Thyroid gland (tissue), 4 donors: ENCODE measurements at regions of chr16 and their contacts with region 1.

Region 1: GRCh38 chr16:8885674-8886592 is 3.8 kb downstream of the LITAFD start:
- DNase-seq: peak in 1 of 2 donors; percentile 31
- H3K4me3 ChIP-seq: no peak overlapping the region
- H3K27ac ChIP-seq: no peak overlapping the region
- H3K4me1 ChIP-seq: peaks cover 0 to 17% of the 10 kb centered on the region in 2 donors
- H3K27me3 ChIP-seq: no peaks in the 10 kb centered on the region
- CTCF ChIP-seq: no peak
- POLR2A ChIP-seq: no peak

Region 2: GRCh38 chr16:8928467-8928957 is 42.6 kb after region 1 on chr16:
- intact Hi-C with region 1: loop called (anchors 5 kb)
- DNase-seq: no peak
- H3K4me3 ChIP-seq: no peak overlapping the region
- H3K27ac ChIP-seq: no peak overlapping the region
- H3K4me1 ChIP-seq: peaks cover 6 to 10% of the 10 kb centered on the region in 2 donors
- H3K27me3 ChIP-seq: no peaks in the 10 kb centered on the region
- CTCF ChIP-seq: no peak
- POLR2A ChIP-seq: no peak

Region 3: GRCh38 chr16:8963825-8964441 is 78.0 kb after region 1 on chr16 and contains the start of gene USP7:
- intact Hi-C with region 1: loop called (anchors 10 kb)
- DNase-seq: peak; percentile 88 to 93
- H3K4me3 ChIP-seq: peak within 1 kb of the TSS; percentile 17 to 77 (median 57)
- H3K27ac ChIP-seq: peak within 1 kb of the TSS in 2 of 3 donors; percentile 21 to 79
- H3K4me1 ChIP-seq: peaks cover 35 to 36% of the 10 kb centered on the region in 2 donors
- H3K27me3 ChIP-seq: no peaks in the 10 kb centered on the region
- CTCF ChIP-seq: no peak
- POLR2A ChIP-seq: peak in 1 of 2 donors; percentile 82
- total RNA-seq, gene USP7: 57.9 to 93.6 (median 85.5) TPM

Region 4: DNA sequence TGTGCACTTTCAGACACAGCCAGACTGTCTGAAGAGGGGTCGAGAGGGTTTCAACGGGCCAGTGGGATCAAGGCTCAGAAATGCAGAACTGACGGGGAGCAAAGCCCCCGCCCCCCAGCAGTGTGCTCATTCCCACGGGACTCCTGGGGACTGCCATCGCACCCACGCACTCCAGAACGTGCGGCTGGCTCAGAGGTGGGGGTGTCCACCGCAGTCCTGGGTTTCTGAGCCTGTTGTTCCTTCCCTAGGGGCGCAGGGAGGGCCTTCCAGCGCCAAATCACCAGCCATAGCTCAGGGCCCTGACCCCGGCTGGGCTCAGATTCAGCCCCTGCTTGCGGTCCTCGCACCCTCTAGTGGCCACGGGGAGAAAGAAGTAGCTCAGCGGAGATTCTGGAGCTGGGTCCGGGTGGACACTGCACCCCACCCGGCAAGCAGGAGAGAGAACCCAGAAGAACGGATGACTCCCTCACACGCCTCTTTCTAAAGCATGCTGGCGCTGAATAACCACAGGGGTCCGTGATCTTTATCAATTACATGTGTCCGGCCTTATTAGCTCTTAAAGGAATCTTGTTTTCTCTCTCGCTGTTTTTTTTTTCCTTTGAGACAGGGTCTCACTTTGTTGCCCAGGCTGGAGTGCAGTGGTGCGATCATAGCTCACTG is 122.8 kb after region 1 on chr16:
- intact Hi-C with region 1: no loop called
- DNase-seq: peak; percentile 69 to 77
- H3K4me3 ChIP-seq: no peak overlapping the region
- H3K27ac ChIP-seq: no peak overlapping the region
- H3K4me1 ChIP-seq: peaks cover 4 to 9% of the 10 kb centered on the region in 2 donors
- H3K27me3 ChIP-seq: no peaks in the 10 kb centered on the region
- CTCF ChIP-seq: peak; percentile 34 to 83 (median 70)
- POLR2A ChIP-seq: no peak

Region 5: DNA sequence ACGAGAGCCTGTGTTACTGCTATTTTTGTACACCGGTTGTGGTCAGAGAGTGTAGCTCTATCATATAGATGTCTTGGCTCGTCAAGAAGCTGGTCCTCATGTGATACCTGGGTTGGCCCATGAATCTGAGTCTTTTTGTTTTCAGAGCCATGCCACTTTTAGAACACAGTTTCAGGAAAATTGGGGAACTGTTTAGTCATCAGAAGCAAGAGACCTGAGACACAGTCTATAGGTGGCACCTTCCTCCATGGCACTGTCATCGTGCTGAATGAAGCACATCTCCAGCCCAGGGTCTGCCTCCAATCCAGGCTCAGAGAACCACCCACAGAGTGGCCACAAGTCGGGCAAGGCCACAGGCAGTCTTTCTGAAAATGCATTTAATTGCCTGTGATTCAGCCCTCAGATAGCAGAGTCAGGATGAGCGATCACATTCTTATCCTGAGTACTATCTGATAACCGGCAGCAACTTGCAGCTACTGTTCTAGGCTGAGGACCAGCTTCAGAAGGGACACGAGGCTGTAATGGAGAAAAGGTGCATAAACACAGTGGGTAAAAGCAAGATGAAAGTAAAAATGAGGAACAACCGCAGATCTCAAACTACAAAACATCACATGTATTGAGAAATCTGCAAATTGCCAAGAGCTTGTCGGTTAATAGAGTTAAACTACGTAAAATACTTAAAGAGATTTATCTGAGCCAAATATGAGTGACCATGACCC is 191.3 kb after region 1 on chr16:
- intact Hi-C with region 1: no loop called
- DNase-seq: no peak
- H3K4me3 ChIP-seq: no peak overlapping the region
- H3K27ac ChIP-seq: no peak overlapping the region
- H3K4me1 ChIP-seq: no peaks in the 10 kb centered on the region
- H3K27me3 ChIP-seq: no peaks in the 10 kb centered on the region
- CTCF ChIP-seq: no peak
- POLR2A ChIP-seq: no peak